Activated naive CD4-positive, alpha-beta T cell treated with anti-CD3 and anti-CD28 coated beads for 36 hours (primary cell): ENCODE measurements at regions of chr5 and their contacts with region 1.

Region 1: DNA sequence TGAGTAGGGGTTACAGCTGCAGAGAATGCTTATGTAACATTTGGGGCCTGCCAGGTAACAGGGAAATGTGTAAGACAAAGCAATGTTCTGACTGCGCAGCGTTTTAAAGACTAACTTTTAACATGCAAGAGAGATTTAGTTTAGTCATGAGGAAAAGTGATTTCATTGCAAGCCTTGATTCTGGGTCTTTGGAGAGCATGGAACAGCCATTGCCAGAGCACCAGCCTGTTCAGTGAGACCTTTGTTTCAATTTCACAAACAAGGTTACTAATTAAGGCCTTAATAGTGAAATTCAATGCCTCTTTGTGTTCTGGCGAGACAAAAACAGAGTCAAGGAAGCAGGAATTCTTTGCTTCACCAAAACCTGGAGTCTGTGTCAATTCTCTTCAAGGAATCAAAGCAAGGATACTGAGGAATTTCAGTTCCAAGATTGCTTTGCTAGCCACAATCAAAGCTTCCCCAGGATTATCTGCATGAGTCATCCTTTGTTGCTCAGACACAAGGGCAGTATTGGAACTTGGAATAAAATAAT is 14.4 kb downstream of the CKMT2 start:
- DNase-seq: no peak
- H3K4me3 Mint-ChIP-seq: no peak overlapping the region
- H3K27ac Mint-ChIP-seq: no peak overlapping the region
- H3K4me1 Mint-ChIP-seq: no peaks in the 10 kb centered on the region
- H3K27me3 Mint-ChIP-seq: no peaks in the 10 kb centered on the region

Region 2: GRCh38 chr5:81292130-81292529 is 44.6 kb after region 1 on chr5:
- CTCF ChIA-PET with region 1: no interaction called
- intact Hi-C with region 1: loop called (anchors 10 kb)
- DNase-seq: no peak
- H3K4me3 Mint-ChIP-seq: no peak overlapping the region
- H3K27ac Mint-ChIP-seq: no peak overlapping the region
- H3K4me1 Mint-ChIP-seq: peaks cover 49% of the 10 kb centered on the region
- H3K27me3 Mint-ChIP-seq: no peaks in the 10 kb centered on the region